ENCODE measurements at regions of chr1 and their contacts with region 1.

Region 1: DNA sequence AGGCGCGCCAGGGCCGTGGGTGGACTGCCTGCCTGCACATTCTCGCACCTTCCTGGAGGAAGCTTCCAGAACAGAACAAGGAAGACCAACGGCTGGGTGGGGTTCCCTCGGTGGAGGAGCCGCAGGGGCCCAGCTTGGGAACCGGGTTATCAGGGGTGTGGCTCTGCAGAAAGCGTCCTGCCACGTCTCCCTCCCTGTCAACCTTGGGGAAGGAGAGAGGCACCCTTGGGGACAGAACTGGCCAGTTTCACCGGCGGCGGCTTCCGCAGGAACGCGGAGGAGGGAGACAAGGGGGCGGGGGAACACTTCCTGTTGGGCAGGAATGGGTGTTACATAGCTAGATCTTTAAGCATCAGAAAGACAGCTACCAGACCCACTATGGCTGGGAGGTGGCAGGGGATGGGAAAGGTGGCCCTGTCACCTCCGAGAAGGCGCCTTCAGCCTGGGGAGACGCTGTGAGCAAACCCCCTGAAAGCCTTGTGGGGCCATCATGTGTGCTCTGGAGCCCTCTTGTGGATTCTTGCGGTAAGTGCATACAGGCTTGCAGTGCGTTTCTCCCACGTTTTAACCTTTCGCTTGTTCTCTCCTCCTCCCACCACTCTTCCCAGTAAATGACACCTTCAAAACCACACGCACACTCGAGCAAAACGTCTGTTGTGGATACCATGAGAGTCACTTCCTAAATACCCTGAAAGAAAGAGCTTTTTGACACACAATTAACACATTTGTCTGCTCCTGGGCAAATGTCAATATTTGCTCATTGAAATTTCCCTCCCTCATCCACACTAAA is 3.8 kb upstream of the PLEKHA6 start:
- DNase-seq: peak in 1 of 2 experiments; percentile 91
- H3K4me3 ChIP-seq: peak overlapping the region in 3 of 4 experiments; percentile 30 to 50 (median 45); a peak in 6 of 8 replicates
- H3K27ac ChIP-seq: no peak overlapping the region
- H3K4me1 ChIP-seq: peaks cover 8 to 9% (median 9%) of the 10 kb centered on the region in 4 experiments
- H3K27me3 ChIP-seq: peaks cover 0 to 9% (median 5%) of the 10 kb centered on the region in 4 experiments; a peak in 4 of 7 replicates
- CTCF ChIP-seq: peak; percentile 84 to 98 (median 93)
- EP300 ChIP-seq: no peak
- POLR2A ChIP-seq: no peak
- RAD21 ChIP-seq: peak; percentile 96 to 99

Region 2: GRCh38 chr1:204190212-204191211 is 173.0 kb before region 1 on chr1:
- CTCF ChIA-PET with region 1: interaction called, 25 read pairs
- POLR2A ChIA-PET with region 1: no interaction called
- DNase-seq: peak in 1 of 2 experiments; percentile 84
- H3K4me3 ChIP-seq: peak overlapping the region; percentile 20 to 57 (median 23)
- H3K27ac ChIP-seq: no peak overlapping the region
- H3K4me1 ChIP-seq: no peaks in the 10 kb centered on the region
- H3K27me3 ChIP-seq: peaks cover 0 to 8% (median 6%) of the 10 kb centered on the region in 4 experiments; a peak in 4 of 7 replicates
- CTCF ChIP-seq: no peak
- EP300 ChIP-seq: no peak
- POLR2A ChIP-seq: no peak
- RAD21 ChIP-seq: no peak

Region 3: GRCh38 chr1:204225841-204226735 is 137.4 kb before region 1 on chr1:
- CTCF ChIA-PET with region 1: interaction called, 156 read pairs
- POLR2A ChIA-PET with region 1: no interaction called
- DNase-seq: no peak
- H3K4me3 ChIP-seq: no peak overlapping the region
- H3K27ac ChIP-seq: no peak overlapping the region
- H3K4me1 ChIP-seq: 0 out of 7 replicates have a peak, but pooled peaks cover 0 to 2% (median 0%) of the 10 kb centered on the region in 4 experiments
- H3K27me3 ChIP-seq: no peaks in the 10 kb centered on the region
- CTCF ChIP-seq: no peak
- EP300 ChIP-seq: no peak
- POLR2A ChIP-seq: no peak
- RAD21 ChIP-seq: no peak

Region 4: GRCh38 chr1:204263254-204263910 is 100.1 kb before region 1 on chr1:
- CTCF ChIA-PET with region 1: interaction called, 318 read pairs
- POLR2A ChIA-PET with region 1: no interaction called
- DNase-seq: no peak
- H3K4me3 ChIP-seq: no peak overlapping the region
- H3K27ac ChIP-seq: no peak overlapping the region
- H3K4me1 ChIP-seq: no peaks in the 10 kb centered on the region
- H3K27me3 ChIP-seq: no peaks in the 10 kb centered on the region
- CTCF ChIP-seq: no peak
- EP300 ChIP-seq: no peak
- POLR2A ChIP-seq: no peak
- RAD21 ChIP-seq: no peak

Region 5: DNA sequence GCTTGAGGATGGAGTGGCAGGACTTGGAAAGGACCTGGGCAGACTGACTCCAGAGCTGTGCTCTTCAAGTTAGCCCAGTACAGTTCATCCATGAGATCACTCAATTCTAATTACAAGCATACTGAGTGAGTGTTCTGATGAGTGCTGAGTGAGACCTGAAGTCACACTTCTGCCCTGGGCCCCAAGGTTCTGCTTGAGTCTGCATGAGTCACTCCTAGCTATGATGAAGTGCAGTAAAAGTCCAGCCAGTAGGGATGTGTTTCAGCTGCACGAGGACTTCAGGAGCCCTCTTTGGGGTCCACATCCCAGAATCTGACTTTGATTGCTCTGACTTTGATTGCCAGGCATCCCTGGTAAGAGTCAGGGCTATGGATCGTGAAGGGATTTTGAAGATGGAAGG is 39.6 kb before region 1 on chr1:
- CTCF ChIA-PET with region 1: interaction called, 175 read pairs
- POLR2A ChIA-PET with region 1: no interaction called
- DNase-seq: no peak
- H3K4me3 ChIP-seq: no peak overlapping the region
- H3K27ac ChIP-seq: no peak overlapping the region
- H3K4me1 ChIP-seq: peaks cover 0 to 9% (median 4%) of the 10 kb centered on the region in 4 experiments; a peak in 6 of 7 replicates
- H3K27me3 ChIP-seq: no peaks in the 10 kb centered on the region
- CTCF ChIP-seq: no peak
- EP300 ChIP-seq: no peak
- POLR2A ChIP-seq: no peak
- RAD21 ChIP-seq: no peak

Region 6: DNA sequence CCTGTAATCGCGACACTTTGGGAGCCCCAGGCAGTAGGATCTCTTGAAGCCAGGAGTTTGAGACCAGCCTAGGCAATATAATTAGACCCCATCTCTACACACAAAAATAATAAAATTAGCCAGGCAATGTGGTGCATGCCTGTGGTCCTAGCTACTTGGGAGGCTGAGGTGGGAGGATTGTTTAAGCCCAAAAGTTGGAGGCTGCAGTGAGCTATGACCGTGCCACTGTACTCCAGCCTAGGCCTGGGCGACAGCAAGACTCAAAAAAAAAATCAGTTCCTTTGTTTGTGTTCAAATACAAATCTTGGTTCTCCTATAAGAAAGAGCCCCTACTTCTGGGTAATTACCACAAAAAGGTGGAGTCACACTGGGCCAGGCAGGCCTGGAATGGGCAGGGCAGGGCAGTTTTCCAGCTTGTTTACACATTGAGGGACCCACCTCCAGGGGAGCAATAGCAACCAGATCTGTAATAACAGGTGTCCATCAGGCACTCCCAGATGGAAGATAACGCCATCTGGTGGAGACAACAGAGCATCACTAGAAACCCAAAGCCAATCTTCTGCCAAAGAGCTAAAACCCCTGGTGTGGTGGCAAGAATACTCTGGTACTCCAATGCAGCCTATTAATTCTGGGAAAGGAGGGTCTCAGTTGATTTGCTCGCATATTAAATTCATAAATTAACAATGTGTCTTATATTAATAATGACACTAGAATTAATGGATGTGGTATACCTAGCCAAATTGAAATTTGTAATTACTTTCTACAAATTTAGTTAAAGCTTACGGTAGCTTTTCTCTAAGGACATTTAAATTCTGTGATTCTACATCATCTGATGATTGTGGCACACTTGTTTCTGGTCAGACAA is 34.9 kb after region 1 on chr1:
- CTCF ChIA-PET with region 1: interaction called, 18 read pairs
- POLR2A ChIA-PET with region 1: no interaction called
- DNase-seq: peak; percentile 74 to 82
- H3K4me3 ChIP-seq: no peak overlapping the region
- H3K27ac ChIP-seq: no peak overlapping the region; the same call in 1 of the 2 replicates
- H3K4me1 ChIP-seq: no peaks in the 10 kb centered on the region
- H3K27me3 ChIP-seq: no peaks in the 10 kb centered on the region
- CTCF ChIP-seq: peak; percentile 26 to 98 (median 96)
- EP300 ChIP-seq: peak in 1 of 2 experiments; percentile 57; a peak in 1 of 3 replicates
- POLR2A ChIP-seq: no peak
- RAD21 ChIP-seq: peak; percentile 67 to 84